ENCODE measurements at regions of chr7 and their contacts with region 1.

Region 1: DNA sequence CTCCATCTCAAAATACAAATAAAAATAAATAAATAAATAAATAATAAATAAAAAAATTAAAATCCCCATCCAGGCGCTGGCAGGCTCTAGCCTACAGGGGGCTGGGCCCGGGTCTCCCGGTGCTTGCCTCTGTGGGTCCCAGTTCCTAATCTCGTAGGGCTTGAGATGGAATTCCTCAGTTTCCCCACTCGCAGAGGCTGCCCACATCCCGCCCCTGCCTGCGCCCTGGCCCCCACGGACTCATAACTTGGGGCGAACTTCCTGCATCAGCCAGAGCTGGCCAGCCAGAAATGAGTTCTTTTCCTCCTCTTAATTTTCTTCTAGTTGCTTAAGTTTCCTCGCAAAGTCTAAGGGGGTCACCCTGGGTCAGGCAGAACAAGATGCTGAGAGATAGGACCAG is 22.0 kb upstream of the SRRM3 start:
- DNase-seq: no peak
- H3K4me3 ChIP-seq: no peak overlapping the region
- H3K27ac ChIP-seq: no peak overlapping the region
- H3K4me1 ChIP-seq: peaks cover 0 to 3% (median 1%) of the 10 kb centered on the region in 4 experiments; a peak in 3 of 7 replicates
- H3K27me3 ChIP-seq: no peaks in the 10 kb centered on the region
- CTCF ChIP-seq: no peak
- EP300 ChIP-seq: no peak
- POLR2A ChIP-seq: no peak
- RAD21 ChIP-seq: no peak; a peak in 1 of 4 replicates

Region 2: DNA sequence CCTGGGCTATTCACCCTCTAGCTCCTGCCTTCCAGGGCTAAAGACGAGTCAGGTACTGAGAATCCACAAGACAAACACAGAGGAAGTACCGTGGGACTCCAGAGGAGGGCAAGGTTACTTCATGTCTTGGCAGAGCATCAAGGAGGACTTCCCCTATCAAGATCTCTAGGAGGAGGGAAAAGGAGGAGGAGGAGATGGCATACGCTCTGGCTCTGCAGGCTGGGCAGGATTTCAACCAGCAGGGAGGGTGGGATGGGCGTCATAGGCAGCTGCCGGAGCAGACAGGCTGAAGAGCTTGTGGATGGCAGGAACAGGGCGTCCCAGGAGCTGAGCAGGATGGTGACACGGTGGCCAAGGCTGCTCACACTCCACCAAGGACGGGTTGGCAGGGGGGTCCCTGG is 110.4 kb before region 1 on chr7:
- CTCF ChIA-PET with region 1: interaction called, 14 read pairs
- POLR2A ChIA-PET with region 1: no interaction called
- DNase-seq: peak in 1 of 2 experiments; percentile 46
- H3K4me3 ChIP-seq: no peak overlapping the region
- H3K27ac ChIP-seq: no peak overlapping the region
- H3K4me1 ChIP-seq: peaks cover 0 to 3% (median 1%) of the 10 kb centered on the region in 4 experiments; a peak in 5 of 7 replicates
- H3K27me3 ChIP-seq: no peaks in the 10 kb centered on the region
- CTCF ChIP-seq: peak; percentile 32 to 69 (median 67)
- EP300 ChIP-seq: no peak
- POLR2A ChIP-seq: no peak
- RAD21 ChIP-seq: peak; percentile 84

Region 3: DNA sequence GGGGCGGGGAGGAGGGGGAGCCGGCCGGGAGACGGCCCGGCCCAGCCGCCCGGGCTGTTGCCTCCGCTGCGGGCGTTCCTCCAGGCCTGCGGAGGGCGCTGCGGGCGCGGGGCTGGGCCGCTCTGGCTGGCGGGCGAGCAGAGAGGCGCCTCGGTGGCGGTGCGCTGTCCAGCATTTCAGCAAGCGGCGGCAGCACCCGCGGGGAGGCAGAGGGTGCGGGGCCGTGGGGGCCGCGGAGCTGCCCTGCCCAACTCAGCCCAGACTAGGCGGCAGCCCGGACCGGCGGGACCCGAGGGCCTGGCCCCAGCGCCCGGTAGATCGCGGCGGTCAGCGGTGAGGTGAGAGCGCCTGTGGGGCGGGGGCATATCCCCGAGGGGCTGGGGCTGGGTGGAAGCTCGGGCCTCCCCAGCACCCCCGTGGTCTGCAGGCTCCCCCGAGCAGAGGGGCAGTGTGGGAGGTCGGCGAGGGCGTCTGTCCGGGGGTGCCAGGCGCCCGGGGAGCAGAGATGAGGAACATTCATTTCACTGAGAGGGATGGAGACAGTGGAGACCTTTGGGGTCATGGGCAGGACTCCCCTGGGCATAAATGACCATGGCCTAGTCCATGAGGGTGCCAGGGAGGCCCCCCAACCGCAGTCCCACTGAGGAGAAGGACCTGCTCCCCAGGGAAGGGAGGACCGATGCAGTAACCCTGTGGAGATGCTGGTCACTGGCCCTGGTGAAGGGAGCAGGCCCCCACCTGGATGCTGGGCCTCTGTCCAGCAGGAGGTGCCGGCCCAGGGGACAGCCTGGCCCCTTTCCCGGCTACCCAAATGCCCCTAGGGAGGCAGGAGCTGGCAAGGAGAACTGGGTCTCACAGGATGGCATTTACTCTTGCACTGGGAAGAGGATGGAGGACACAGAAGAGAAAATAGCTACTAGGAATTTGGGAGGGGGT is 22.3 kb after region 1 on chr7 and contains the start of gene SRRM3:
- CTCF ChIA-PET with region 1: interaction called, 155 read pairs
- POLR2A ChIA-PET with region 1: interaction called, 5 read pairs
- DNase-seq: peak in 1 of 2 experiments; percentile 98
- H3K4me3 ChIP-seq: peak within 1 kb of the TSS; percentile 26 to 71 (median 46)
- H3K27ac ChIP-seq: no peak within 1 kb of the TSS
- H3K4me1 ChIP-seq: peaks cover 0 to 8% (median 6%) of the 10 kb centered on the region in 4 experiments; a peak in 5 of 7 replicates
- H3K27me3 ChIP-seq: 0 out of 7 replicates have a peak, but pooled peaks cover 0 to 2% (median 0%) of the 10 kb centered on the region in 4 experiments
- CTCF ChIP-seq: peak; percentile 80 to 89 (median 87)
- EP300 ChIP-seq: peak in 1 of 2 experiments; percentile 83; a peak in 1 of 3 replicates
- POLR2A ChIP-seq: no peak
- RAD21 ChIP-seq: peak; percentile 25 to 57; a peak in 3 of 4 replicates
- total RNA-seq, gene SRRM3: 16.0 and 17.4 TPM in 2 replicates

Region 4: DNA sequence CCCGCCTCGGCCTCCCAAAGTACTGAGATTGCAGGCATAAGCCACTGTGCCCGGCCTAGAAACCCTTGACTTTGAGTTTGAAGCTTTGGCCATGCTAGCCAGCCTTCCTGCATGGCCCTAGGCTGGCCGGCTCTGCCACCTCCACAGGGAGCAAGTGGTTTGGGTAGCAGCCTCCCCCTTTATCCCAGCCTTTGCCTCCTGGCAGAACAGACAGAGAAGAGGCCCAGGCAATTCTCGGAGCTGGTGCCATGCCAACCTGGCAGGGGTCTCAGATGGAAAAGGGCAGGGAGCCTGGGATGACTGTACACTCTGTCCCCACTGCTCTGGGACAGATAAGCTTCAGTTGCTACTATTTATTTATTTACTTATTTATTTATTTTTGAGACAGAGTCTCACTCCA is 61.5 kb after region 1 on chr7:
- CTCF ChIA-PET with region 1: interaction called, 16 read pairs
- POLR2A ChIA-PET with region 1: no interaction called
- DNase-seq: no peak
- H3K4me3 ChIP-seq: no peak overlapping the region
- H3K27ac ChIP-seq: no peak overlapping the region
- H3K4me1 ChIP-seq: peaks cover 0 to 12% (median 9%) of the 10 kb centered on the region in 4 experiments; a peak in 6 of 7 replicates
- H3K27me3 ChIP-seq: no peaks in the 10 kb centered on the region; a peak in 1 of 7 replicates
- CTCF ChIP-seq: no peak
- EP300 ChIP-seq: no peak
- POLR2A ChIP-seq: no peak
- RAD21 ChIP-seq: no peak

Region 5: DNA sequence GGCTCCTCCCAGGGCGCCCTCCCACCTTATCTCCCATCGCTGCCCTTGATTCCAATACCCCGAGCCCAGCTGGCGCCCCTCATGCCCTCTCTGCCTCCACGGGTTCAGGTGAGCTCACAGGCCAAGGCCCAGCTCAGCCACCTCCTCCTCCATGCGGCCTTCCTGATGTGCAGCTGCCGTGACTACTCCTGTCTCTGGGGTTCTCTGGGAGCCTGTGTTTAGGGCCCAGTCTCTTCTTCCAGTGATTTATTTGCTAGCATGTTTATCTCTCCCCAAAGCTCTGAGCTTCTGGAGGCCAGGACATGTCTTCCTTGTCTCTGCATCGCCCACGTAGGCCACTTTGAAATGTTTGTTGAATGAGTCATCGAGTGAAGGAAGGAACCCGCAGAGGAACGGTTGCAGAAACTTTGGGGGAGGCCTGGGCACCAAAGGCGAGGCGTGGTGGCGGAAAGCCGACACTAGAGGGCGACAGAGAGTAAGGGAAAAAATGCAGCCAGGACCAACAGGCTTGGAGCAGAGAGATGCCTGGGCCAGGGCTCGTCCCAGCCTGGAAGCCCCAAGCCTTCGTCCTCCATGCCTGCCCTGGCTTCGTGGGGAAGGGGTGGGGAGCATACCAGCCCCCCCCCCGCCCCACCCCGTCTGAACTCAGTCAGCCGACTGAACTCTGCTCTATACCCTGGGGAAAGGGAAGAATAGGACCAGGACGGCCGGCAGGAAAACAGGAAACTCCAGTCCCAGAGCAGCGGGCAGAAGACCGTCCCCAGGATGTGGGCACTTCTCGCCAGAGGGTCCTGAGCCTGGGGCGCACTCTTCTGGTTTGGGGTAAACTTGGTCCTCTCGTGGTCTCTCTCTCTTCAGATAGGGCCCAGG is 111.9 kb after region 1 on chr7:
- CTCF ChIA-PET with region 1: interaction called, 18 read pairs
- POLR2A ChIA-PET with region 1: no interaction called
- DNase-seq: peak; percentile 91 to 99
- H3K4me3 ChIP-seq: peak overlapping the region in 1 of 4 experiments; percentile 23; a peak in 1 of 8 replicates
- H3K27ac ChIP-seq: peak overlapping the region; percentile 53; the same call in 1 of the 2 replicates
- H3K4me1 ChIP-seq: peaks cover 0 to 22% (median 11%) of the 10 kb centered on the region in 4 experiments; a peak in 6 of 7 replicates
- H3K27me3 ChIP-seq: no peaks in the 10 kb centered on the region
- CTCF ChIP-seq: peak; percentile 94 to 99 (median 95)
- EP300 ChIP-seq: peak in 1 of 2 experiments; percentile 34; a peak in 1 of 3 replicates
- POLR2A ChIP-seq: no peak
- RAD21 ChIP-seq: peak; percentile 89 to 92

Region 6: DNA sequence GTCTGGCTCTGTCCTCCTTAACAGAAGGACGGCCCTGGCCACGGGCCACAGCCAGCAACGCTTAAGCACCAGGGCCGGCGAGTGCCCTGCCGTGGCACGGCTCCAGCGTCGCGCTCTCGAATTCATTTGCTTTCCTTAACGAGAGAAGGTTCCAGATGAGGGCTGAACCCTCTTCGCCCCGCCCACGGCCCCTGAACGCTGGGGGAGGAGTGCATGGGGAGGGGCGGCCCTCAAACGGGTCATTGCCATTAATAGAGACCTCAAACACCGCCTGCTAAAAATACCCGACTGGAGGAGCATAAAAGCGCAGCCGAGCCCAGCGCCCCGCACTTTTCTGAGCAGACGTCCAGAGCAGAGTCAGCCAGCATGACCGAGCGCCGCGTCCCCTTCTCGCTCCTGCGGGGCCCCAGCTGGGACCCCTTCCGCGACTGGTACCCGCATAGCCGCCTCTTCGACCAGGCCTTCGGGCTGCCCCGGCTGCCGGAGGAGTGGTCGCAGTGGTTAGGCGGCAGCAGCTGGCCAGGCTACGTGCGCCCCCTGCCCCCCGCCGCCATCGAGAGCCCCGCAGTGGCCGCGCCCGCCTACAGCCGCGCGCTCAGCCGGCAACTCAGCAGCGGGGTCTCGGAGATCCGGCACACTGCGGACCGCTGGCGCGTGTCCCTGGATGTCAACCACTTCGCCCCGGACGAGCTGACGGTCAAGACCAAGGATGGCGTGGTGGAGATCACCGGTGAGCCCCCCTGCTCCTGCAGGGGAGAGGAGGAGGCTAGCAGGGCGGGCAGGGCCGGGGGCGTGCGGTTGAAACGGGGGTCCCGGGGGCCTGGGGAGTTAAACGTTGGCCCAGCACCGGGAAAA is 122.9 kb after region 1 on chr7 and contains the start of gene HSPB1:
- CTCF ChIA-PET with region 1: interaction called, 13 read pairs
- POLR2A ChIA-PET with region 1: interaction called, 3 read pairs
- DNase-seq: peak in 1 of 2 experiments; percentile 87
- H3K4me3 ChIP-seq: peak within 1 kb of the TSS; percentile 44 to 68 (median 48)
- H3K27ac ChIP-seq: no peak within 1 kb of the TSS
- H3K4me1 ChIP-seq: peaks cover 0 to 8% (median 3%) of the 10 kb centered on the region in 4 experiments; a peak in 2 of 7 replicates
- H3K27me3 ChIP-seq: peaks cover 0 to 6% (median 4%) of the 10 kb centered on the region in 4 experiments; a peak in 3 of 7 replicates
- CTCF ChIP-seq: no peak; a peak in 1 of 4 replicates
- EP300 ChIP-seq: no peak
- POLR2A ChIP-seq: peak in 1 of 2 experiments; percentile 53; a peak in 1 of 3 replicates
- RAD21 ChIP-seq: no peak
- total RNA-seq, gene HSPB1: 165 and 194 TPM in 2 replicates

Measured in H1 (cell line).